ENCODE measurements at regions of chr7 and their contacts with region 1.

Region 1: DNA sequence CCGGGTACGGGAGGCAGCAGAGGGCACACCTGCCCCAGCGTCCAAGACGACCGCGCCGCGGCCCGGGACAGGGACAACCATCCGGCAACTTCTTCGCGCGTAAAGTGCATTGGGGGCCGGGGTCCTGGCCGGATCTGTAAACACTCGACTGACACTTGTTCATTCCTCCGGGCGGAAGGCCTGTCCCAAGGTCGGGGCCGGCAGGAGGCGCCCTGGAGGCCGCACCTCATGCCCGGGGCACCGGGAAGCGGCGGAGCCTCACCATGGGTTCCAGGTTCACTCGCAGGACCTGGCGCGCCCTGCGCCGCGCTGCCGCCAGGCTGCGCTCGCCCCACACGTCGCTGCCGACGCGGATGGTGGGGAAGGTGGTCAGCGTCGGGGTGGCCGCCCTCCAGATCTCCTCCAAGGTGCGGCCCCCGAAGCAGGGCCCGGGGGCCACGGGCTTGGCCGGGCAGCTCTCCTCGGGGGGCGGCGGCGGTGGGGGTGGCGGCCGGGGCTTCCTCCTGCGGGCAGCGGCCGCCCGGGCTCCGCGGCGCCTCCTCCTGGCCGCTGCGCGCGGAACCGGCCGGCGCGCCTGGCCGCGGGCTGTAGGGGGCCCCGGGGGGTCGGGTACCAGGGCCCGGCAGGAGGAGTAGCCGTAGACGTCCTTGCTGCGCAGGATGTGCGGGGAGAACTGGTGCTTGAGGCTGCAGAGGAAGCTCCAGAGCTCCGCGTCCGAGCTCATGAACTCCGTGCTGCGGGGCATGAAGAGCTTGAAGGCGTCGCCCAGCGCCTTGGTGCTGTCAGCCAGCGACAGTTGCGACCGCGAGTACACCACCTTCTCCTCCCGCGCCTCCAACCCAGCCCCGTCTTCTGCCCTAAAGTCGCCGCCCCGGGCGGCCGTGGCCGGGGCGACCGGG is 746 bp downstream of the CCDC71L start:
- DNase-seq: peak; percentile 75
- ATAC-seq: peak; percentile 74
- H3K4me3 ChIP-seq: peak overlapping the region; percentile 55 to 67
- H3K27ac ChIP-seq: peak overlapping the region; percentile 92
- H3K4me1 ChIP-seq: peaks cover 0 to 18% of the 10 kb centered on the region in 2 experiments; a peak in 3 of 4 replicates
- H3K27me3 ChIP-seq: no peaks in the 10 kb centered on the region
- CTCF ChIP-seq: peak; percentile 74 to 97 (median 91)
- POLR2A ChIP-seq: peak; percentile 25
- RAD21 ChIP-seq: peak; percentile 85

Region 2: DNA sequence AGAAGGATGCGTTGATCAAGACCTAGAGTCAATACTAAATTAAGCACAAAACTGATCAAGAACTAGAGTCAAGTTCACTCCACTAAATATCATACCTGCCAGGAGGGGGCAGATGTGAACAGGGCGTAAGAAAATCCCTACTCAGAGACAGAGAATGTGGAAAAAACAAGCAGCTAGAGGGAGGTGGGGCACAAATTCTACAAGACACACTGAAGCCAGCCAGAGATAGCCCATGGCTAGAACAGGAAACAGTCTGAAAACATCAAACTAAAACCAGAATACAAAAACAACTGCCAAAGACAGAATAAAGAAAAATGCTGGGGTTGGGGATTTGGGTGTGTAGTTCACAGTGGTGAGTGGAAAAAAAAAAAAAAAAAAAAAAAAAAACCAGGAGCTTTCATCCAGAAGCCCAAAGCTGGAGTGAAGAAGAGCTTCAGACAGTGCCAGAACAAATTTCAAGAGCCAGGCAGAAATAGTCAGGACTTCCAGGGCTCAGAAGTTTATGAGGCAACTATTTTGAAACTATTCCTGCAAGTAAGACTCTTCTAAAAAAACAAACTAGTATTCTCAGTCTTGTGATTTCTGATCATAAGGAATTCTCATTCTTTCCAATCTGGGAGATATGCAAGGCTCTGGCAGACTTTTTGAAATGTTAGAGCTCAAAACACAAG is 117.5 kb before region 1 on chr7:
- CTCF ChIA-PET with region 1: interaction called, 22 read pairs
- POLR2A ChIA-PET with region 1: interaction called, 3 read pairs
- RAD21 ChIA-PET with region 1: interaction called, 5 to 6 read pairs
- intact Hi-C with region 1: loop called (anchors 1 kb)
- DNase-seq: peak; percentile 77
- ATAC-seq: peak; percentile 97
- H3K4me3 ChIP-seq: no peak overlapping the region
- H3K27ac ChIP-seq: no peak overlapping the region
- H3K4me1 ChIP-seq: peaks cover 0 to 14% of the 10 kb centered on the region in 2 experiments; a peak in 3 of 4 replicates
- H3K27me3 ChIP-seq: no peaks in the 10 kb centered on the region
- CTCF ChIP-seq: peak; percentile 68 to 96 (median 80)
- POLR2A ChIP-seq: no peak
- RAD21 ChIP-seq: peak; percentile 91

Region 3: GRCh38 chr7:106717955-106718871 is 58.0 kb after region 1 on chr7:
- CTCF ChIA-PET with region 1: no interaction called
- POLR2A ChIA-PET with region 1: no interaction called
- RAD21 ChIA-PET with region 1: no interaction called
- intact Hi-C with region 1: no loop called
- DNase-seq: peak; percentile 87
- ATAC-seq: peak; percentile 93
- H3K4me3 ChIP-seq: peak overlapping the region in 1 of 2 experiments; percentile 22; a peak in 3 of 4 replicates
- H3K27ac ChIP-seq: peak overlapping the region; percentile 62; the same call in 1 of the 2 replicates
- H3K4me1 ChIP-seq: peaks cover 15 to 32% of the 10 kb centered on the region in 2 experiments
- H3K27me3 ChIP-seq: no peaks in the 10 kb centered on the region
- CTCF ChIP-seq: no peak
- POLR2A ChIP-seq: no peak
- RAD21 ChIP-seq: peak; percentile 29

Region 4: DNA sequence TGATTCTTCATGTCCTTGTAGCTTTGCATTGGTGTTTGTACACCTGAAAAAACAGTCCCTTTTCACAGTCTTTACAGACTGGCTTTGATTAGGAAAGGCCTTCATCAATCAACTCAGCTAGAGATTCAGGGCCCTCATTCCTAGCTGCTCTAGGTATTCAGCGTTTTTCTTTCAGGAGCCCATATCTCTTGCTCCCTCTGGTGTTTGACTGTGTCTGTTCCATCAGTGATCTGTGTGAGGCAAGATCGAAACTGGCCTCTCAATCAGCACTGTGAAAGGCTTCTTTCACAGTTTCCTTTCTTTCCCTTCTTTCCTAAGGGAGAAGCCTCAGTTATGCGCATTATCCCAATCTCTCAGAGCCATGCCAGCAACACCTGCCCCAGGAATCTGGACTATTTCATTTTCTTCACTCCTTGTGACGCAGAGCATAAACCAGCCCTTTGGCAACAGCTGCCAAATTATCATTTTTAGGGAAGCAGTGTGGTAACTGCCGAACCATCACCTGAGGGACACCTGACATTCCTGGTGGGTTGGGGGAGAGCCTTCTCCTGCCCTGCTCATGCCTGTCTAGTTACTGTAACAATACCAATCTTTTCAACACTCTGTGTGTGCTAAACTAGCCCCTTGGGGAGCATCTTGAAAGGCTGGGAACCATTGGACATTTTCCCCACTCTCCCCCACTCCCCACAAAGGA is 76.4 kb after region 1 on chr7:
- CTCF ChIA-PET with region 1: interaction called, 43 read pairs
- POLR2A ChIA-PET with region 1: interaction called, 3 read pairs
- RAD21 ChIA-PET with region 1: interaction called, 4 to 5 read pairs
- intact Hi-C with region 1: loop called (anchors 1 kb)
- DNase-seq: peak; percentile 73
- ATAC-seq: peak; percentile 98
- H3K4me3 ChIP-seq: peak overlapping the region in 1 of 2 experiments; percentile 17; a peak in 1 of 4 replicates
- H3K27ac ChIP-seq: peak overlapping the region; percentile 30
- H3K4me1 ChIP-seq: peaks cover 0 to 12% of the 10 kb centered on the region in 2 experiments; a peak in 2 of 4 replicates
- H3K27me3 ChIP-seq: no peaks in the 10 kb centered on the region
- CTCF ChIP-seq: peak; percentile 71 to 97 (median 82)
- POLR2A ChIP-seq: no peak
- RAD21 ChIP-seq: peak; percentile 95

Region 5: GRCh38 chr7:106779877-106780276 is 119.7 kb after region 1 on chr7:
- CTCF ChIA-PET with region 1: interaction called, 7 read pairs
- POLR2A ChIA-PET with region 1: no interaction called
- RAD21 ChIA-PET with region 1: no interaction called
- intact Hi-C with region 1: loop called (anchors 2 kb)
- DNase-seq: peak; percentile 59
- ATAC-seq: peak; percentile 83
- H3K4me3 ChIP-seq: no peak overlapping the region
- H3K27ac ChIP-seq: peak overlapping the region; percentile 6; the same call in 1 of the 2 replicates
- H3K4me1 ChIP-seq: peaks cover 23 to 63% of the 10 kb centered on the region in 2 experiments
- H3K27me3 ChIP-seq: no peaks in the 10 kb centered on the region
- CTCF ChIP-seq: peak; percentile 58 to 66 (median 64); a peak in 5 of 6 replicates
- POLR2A ChIP-seq: no peak
- RAD21 ChIP-seq: peak; percentile 79

Region 6: GRCh38 chr7:107168233-107169119 is 508.3 kb after region 1 on chr7 and contains the start of gene HBP1:
- CTCF ChIA-PET with region 1: no interaction called
- POLR2A ChIA-PET with region 1: no interaction called
- RAD21 ChIA-PET with region 1: no interaction called
- intact Hi-C with region 1: loop called (anchors 5 kb)
- DNase-seq: peak; percentile 100
- ATAC-seq: peak; percentile 88
- H3K4me3 ChIP-seq: peak within 1 kb of the TSS; percentile 70 to 75
- H3K27ac ChIP-seq: peak within 1 kb of the TSS; percentile 67
- H3K4me1 ChIP-seq: peaks cover 5 to 18% of the 10 kb centered on the region in 2 experiments; a peak in 3 of 4 replicates
- H3K27me3 ChIP-seq: no peaks in the 10 kb centered on the region
- CTCF ChIP-seq: no peak
- POLR2A ChIP-seq: no peak
- RAD21 ChIP-seq: no peak
- total RNA-seq, gene HBP1: 24.3 TPM